ENCODE measurements at regions of chr11 and their contacts with region 1.

Region 1: DNA sequence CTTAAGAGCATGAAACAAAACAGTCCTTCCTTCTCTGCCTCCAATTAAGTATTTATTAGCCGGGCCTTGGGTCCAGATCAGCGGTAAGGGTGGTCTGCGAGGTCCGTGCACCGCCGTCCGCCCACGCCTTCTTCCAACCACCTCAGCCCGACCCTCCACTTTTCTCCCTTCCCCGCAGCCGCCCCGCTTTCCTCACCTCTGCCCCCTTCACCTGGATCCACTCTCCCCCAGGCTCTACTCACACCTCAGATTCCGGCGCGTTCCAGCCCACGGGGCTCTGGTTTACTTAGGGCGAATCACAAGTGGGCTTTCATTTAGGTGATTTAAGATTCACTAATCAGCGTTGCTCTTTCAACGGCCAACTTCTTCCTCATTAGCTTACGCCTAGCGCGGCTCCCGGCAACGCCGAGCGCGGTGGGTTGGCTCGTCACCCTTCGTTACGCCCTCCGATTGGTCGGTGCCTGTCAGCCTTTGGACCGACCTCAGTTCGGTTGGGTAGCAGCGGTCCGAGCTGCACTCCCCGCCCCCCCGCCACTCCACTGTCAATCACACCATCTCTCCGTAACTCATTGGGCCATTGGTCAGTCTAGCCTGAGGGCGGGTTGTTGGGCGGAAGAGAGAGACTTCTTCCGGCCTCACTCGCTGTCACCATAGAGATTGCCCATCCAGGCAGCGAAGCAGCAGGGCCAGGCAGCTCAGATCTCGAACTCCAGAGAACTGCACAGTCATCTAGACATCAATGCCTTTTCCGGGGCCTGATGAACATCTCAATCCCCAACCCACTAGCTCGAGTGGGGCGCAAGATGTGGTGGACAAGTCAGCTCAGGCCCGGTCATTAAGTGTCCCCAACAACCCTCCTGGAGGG is at the start of gene TMEM218:
- DNase-seq: peak; percentile 99
- ATAC-seq: peak; percentile 99
- H3K4me3 ChIP-seq: peak within 1 kb of the TSS; percentile 89 to 97
- H3K27ac ChIP-seq: peak within 1 kb of the TSS; percentile 96
- H3K4me1 ChIP-seq: peaks cover 7% of the 10 kb centered on the region; the same call in 1 of the 2 replicates
- H3K27me3 ChIP-seq: peaks cover 8% of the 10 kb centered on the region
- CTCF ChIP-seq: no peak
- total RNA-seq, gene TMEM218: 26.8 TPM

Region 2: DNA sequence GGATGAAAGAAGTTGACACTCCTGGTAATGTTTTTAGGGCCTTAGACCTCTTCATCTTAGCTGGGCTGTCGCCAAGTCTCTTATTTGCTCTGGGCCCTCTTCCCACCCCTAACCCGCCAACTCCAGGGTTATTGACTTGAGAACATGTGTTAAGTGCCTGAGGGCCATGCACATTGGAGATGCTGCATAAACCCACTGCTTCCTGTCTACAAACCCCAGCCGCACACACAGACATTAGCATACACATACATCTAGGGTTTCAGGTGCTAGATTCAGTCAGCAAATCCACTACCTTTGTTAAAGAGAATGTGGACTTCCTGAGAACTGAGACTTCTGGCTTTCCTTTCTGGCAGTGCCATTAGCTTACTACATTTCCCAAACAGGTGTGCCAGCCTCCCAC is 499.5 kb before region 1 on chr11:
- CTCF ChIA-PET with region 1: no interaction called
- POLR2A ChIA-PET with region 1: interaction called, 13 read pairs
- in situ Hi-C with region 1: no loop called
- intact Hi-C with region 1: no loop called
- DNase-seq: no peak
- ATAC-seq: no peak; the same call in 1 of the 2 replicates
- H3K4me3 ChIP-seq: no peak overlapping the region
- H3K27ac ChIP-seq: no peak overlapping the region
- H3K4me1 ChIP-seq: no peaks in the 10 kb centered on the region
- H3K27me3 ChIP-seq: no peaks in the 10 kb centered on the region
- CTCF ChIP-seq: no peak